ENCODE measurements at regions of chr1 and their contacts with region 1.

Region 1: GRCh38 chr1:169601093-169601881 is 15.0 kb upstream of the F5 start:
- DNase-seq: no peak
- H3K4me3 Mint-ChIP-seq: no peak overlapping the region
- H3K27ac Mint-ChIP-seq: no peak overlapping the region
- H3K4me1 Mint-ChIP-seq: peaks cover 51% of the 10 kb centered on the region
- H3K27me3 Mint-ChIP-seq: peaks cover 7% of the 10 kb centered on the region

Region 2: GRCh38 chr1:169546087-169546995 is 54.9 kb before region 1 on chr1:
- CTCF ChIA-PET with region 1: interaction called, 11 read pairs
- POLR2A ChIA-PET with region 1: no interaction called
- DNase-seq: peak; percentile 58
- H3K4me3 Mint-ChIP-seq: no peak overlapping the region
- H3K27ac Mint-ChIP-seq: no peak overlapping the region
- H3K4me1 Mint-ChIP-seq: peaks cover 10% of the 10 kb centered on the region
- H3K27me3 Mint-ChIP-seq: no peaks in the 10 kb centered on the region

Region 3: DNA sequence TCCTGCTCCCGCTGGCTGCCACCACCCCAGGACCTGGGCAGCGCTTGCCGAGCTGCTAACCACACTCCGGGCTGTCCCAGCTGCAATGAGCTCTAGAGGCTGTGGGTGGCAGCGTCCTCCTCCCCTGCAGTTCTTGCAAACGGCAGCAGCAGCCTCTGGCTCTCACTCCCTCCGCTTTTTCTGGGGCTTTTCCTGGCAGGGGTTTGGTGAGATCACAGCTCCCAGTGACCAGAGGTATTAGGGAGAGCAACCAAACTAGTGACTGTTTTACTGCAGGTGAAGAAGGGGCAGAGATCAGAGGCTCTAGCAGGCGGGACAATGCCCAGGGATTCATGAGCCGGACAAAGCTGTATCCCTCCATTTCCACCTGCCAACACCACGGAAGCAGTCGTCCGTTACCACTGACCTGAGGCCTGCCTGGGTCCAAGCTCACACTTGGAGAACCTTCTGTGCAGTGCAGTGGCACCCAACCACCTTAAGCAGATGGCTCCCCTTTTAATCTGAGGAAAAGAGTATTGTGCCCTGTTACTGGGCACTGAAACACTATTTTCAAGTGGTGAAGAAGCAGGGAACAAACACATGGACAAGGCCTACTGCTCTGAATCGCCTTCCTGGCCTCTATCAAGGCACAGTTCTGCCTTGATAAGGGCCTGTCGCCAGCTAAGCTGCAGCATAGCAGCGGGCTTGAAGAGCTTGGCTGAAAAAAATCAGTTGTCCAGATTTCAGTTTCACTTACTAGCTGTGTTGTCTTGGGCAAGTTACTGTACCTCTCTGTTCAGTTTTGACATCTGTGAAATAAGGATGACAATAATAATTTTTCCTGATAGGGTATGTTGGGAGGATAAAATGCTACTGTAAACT is 14.7 kb before region 1 on chr1 and contains the start of gene F5:
- CTCF ChIA-PET with region 1: interaction called, 62 read pairs
- POLR2A ChIA-PET with region 1: interaction called, 12 read pairs
- DNase-seq: peak; percentile 85
- H3K4me3 Mint-ChIP-seq: peak within 1 kb of the TSS; percentile 87
- H3K27ac Mint-ChIP-seq: peak within 1 kb of the TSS; percentile 77
- H3K4me1 Mint-ChIP-seq: peaks cover 68% of the 10 kb centered on the region
- H3K27me3 Mint-ChIP-seq: no peaks in the 10 kb centered on the region
- total RNA-seq, gene F5: 8.9 to 11.0 TPM

Region 4: DNA sequence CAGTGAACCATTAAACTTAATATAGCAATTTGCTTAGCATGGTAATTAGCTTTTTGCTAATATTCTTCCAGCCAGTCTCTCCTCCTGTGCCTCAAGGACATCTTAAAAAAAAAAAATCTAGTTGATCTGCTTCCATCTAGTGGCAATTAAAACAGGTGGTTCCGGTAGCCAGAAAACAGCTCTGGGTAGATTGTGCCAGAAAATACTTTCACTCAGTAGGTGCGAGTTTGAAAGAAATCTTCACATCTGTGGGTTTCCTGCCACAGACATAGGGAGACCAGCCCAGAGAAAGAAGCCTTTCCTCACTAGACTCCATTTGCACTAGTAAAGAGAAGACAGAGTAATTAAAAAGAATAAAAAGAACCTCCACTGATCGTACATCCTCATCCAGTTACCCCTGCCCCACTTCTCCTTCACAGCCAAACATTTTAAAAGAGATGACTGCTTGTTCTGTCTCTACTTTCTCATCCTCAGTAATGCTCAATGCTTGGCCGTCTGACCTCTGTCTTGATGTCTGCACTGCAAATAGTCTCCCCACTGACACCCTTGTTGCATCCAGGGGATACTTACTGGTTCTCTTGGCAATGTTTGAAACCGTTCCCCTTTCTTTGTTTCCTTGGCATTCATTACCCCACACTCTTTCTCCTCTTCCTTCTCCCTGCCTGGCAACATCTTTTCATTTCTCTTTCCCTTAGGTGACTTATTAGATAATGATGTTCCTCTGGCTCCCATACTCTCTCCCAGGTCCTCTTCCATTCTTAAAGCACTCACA is 93.2 kb after region 1 on chr1:
- CTCF ChIA-PET with region 1: interaction called, 65 read pairs
- POLR2A ChIA-PET with region 1: interaction called, 57 read pairs
- DNase-seq: peak; percentile 65
- H3K4me3 Mint-ChIP-seq: peak overlapping the region; percentile 31
- H3K27ac Mint-ChIP-seq: peak overlapping the region; percentile 88
- H3K4me1 Mint-ChIP-seq: peaks cover 96% of the 10 kb centered on the region
- H3K27me3 Mint-ChIP-seq: no peaks in the 10 kb centered on the region

Region 5: GRCh38 chr1:169809370-169810095 is 208.2 kb after region 1 on chr1:
- CTCF ChIA-PET with region 1: interaction called, 19 read pairs
- POLR2A ChIA-PET with region 1: no interaction called
- DNase-seq: no peak
- H3K4me3 Mint-ChIP-seq: no peak overlapping the region
- H3K27ac Mint-ChIP-seq: no peak overlapping the region
- H3K4me1 Mint-ChIP-seq: peaks cover 8% of the 10 kb centered on the region
- H3K27me3 Mint-ChIP-seq: no peaks in the 10 kb centered on the region

Measured in activated CD4-positive, alpha-beta memory T cell treated with anti-CD3 and anti-CD28 coated beads, Interleukin-2, amount 10 ng/mL, durations not matched to agents 7 days and 5 days (primary cell).